GM12878 (cell line): ENCODE measurements at regions of chr1 and their contacts with region 1.

Region 1: DNA sequence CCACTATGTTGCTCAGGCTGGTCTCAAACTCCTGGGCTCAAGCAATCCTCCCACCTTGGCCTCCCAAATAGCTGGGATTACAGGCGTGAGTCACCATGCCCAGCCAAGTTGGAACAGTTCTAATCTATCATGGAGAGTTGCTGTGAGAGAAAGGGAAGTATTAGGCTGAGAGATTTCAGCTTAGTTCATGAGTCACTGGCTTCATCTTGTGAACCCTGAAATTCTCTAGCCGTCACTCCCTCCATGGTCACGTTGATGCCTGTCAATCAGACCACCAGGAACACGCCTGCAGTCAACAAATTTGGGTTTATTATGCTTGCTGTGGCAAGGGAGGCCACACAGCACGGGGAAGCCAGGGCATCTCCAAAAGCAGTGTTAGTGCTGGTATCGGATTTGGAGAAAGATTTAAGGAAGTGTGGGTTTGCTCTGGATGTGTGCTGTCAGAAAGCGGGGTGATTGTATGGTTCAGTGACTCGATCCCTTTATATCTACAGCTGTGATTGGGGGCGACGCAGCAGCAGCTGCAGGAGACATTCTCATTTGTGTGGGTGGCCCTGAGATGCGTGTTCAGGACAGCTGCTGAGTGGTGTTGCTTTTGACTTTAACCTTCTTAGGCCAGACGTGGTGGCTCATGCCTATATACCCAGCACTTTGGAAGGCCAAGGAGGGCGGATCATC is 18.7 kb downstream of the UQCRHL start:
- DNase-seq: no peak
- ATAC-seq: peak; percentile 34; the same call in 2 of the 3 replicates
- H3K4me3 ChIP-seq: no peak overlapping the region
- H3K27ac ChIP-seq: no peak overlapping the region
- H3K4me1 ChIP-seq: peaks cover 5% of the 10 kb centered on the region
- H3K27me3 ChIP-seq: no peaks in the 10 kb centered on the region; a peak in 1 of 4 replicates
- CTCF ChIP-seq: no peak
- EP300 ChIP-seq: no peak
- POLR2A ChIP-seq: no peak
- RAD21 ChIP-seq: no peak

Region 2: GRCh38 chr1:15538770-15539169 is 250.0 kb before region 1 on chr1:
- CTCF ChIA-PET with region 1: no interaction called
- POLR2A ChIA-PET with region 1: no interaction called
- RAD21 ChIA-PET with region 1: no interaction called
- SMC1A ChIA-PET with region 1: no interaction called
- in situ Hi-C with region 1: no loop called
- intact Hi-C with region 1: no loop called
- DNase-seq: no peak
- ATAC-seq: no peak
- H3K4me3 ChIP-seq: no peak overlapping the region
- H3K27ac ChIP-seq: no peak overlapping the region
- H3K4me1 ChIP-seq: no peaks in the 10 kb centered on the region
- H3K27me3 ChIP-seq: no peaks in the 10 kb centered on the region
- CTCF ChIP-seq: no peak
- EP300 ChIP-seq: no peak
- POLR2A ChIP-seq: no peak
- RAD21 ChIP-seq: no peak

Region 3: DNA sequence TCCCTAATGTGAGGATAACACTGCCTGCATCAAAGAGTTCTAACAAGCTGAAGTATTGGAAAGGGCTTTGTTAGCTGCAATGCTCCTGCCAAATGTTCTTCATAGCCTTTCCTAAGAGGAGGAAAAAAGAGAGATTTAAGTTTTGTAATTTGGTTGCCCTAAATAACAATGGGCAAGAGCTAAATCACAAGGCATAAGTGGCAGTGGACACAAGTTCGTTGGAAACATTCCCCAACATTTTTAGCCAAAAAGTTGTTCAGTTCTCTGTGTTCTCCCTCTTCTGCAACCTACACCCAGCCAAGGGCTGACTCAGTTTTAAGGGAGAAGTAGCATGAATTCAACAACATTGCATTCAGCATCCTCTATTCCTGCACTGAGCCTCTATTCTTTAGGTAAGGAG is 21.3 kb after region 1 on chr1:
- CTCF ChIA-PET with region 1: interaction called, 31 read pairs
- POLR2A ChIA-PET with region 1: no interaction called
- RAD21 ChIA-PET with region 1: interaction called, 11 read pairs
- SMC1A ChIA-PET with region 1: interaction called, 9 read pairs
- in situ Hi-C with region 1: no loop called
- intact Hi-C with region 1: no loop called
- DNase-seq: no peak
- ATAC-seq: no peak
- H3K4me3 ChIP-seq: no peak overlapping the region
- H3K27ac ChIP-seq: no peak overlapping the region
- H3K4me1 ChIP-seq: no peaks in the 10 kb centered on the region
- H3K27me3 ChIP-seq: no peaks in the 10 kb centered on the region
- CTCF ChIP-seq: no peak
- EP300 ChIP-seq: no peak
- POLR2A ChIP-seq: no peak
- RAD21 ChIP-seq: no peak

Region 4: GRCh38 chr1:15994590-15995351 is 206.0 kb after region 1 on chr1:
- CTCF ChIA-PET with region 1: interaction called, 14 read pairs
- POLR2A ChIA-PET with region 1: no interaction called
- RAD21 ChIA-PET with region 1: interaction called, 5 read pairs
- SMC1A ChIA-PET with region 1: interaction called, 8 read pairs
- in situ Hi-C with region 1: no loop called
- intact Hi-C with region 1: loop called (anchors 5 kb)
- DNase-seq: no peak
- ATAC-seq: peak; percentile 97
- H3K4me3 ChIP-seq: no peak overlapping the region
- H3K27ac ChIP-seq: no peak overlapping the region
- H3K4me1 ChIP-seq: no peaks in the 10 kb centered on the region
- H3K27me3 ChIP-seq: no peaks in the 10 kb centered on the region
- CTCF ChIP-seq: peak; percentile 72 to 83 (median 78)
- EP300 ChIP-seq: no peak
- POLR2A ChIP-seq: no peak
- RAD21 ChIP-seq: peak; percentile 85

Region 5: GRCh38 chr1:16055613-16056520 is 267.1 kb after region 1 on chr1:
- CTCF ChIA-PET with region 1: interaction called, 5 read pairs
- POLR2A ChIA-PET with region 1: no interaction called
- RAD21 ChIA-PET with region 1: interaction called, 9 read pairs
- SMC1A ChIA-PET with region 1: no interaction called
- in situ Hi-C with region 1: no loop called
- intact Hi-C with region 1: loop called (anchors 1 kb)
- DNase-seq: peak; percentile 33
- ATAC-seq: peak; percentile 97
- H3K4me3 ChIP-seq: no peak overlapping the region
- H3K27ac ChIP-seq: no peak overlapping the region
- H3K4me1 ChIP-seq: no peaks in the 10 kb centered on the region
- H3K27me3 ChIP-seq: no peaks in the 10 kb centered on the region
- CTCF ChIP-seq: peak; percentile 97 to 100 (median 98)
- EP300 ChIP-seq: no peak
- POLR2A ChIP-seq: no peak
- RAD21 ChIP-seq: peak; percentile 96

Region 6: DNA sequence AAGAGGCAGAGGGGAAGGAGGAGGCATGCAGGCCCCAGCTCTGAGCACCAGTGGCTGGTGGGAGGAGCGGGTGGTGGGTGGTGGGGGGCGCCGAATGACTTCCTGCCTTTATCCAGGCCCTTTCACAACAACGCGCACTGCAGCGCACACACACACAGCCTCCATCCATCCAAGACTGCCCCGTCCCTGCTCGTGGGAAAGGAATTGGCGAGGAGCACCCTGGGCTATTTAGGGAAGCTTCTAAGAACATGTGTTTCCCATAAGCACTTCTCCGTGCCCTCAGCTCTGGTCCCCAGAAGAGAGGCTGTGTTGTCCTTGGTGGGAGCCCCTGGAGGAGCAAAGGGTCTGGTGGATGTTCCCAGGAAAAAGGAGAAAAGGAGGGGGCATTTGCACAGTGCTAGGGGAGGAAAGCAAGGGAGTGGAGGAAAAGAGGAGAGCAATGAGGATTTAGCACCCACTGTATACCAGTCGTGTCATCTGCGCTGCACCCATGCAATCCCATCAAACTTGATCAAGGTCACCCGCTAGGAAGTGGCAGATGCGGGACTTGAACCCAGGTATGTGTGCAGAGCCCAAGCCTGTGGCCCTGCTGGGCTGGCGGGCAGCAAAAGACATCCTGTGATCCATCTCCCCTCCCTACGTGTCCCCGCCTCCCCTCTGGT is 339.0 kb after region 1 on chr1:
- CTCF ChIA-PET with region 1: no interaction called
- POLR2A ChIA-PET with region 1: no interaction called
- RAD21 ChIA-PET with region 1: no interaction called
- SMC1A ChIA-PET with region 1: no interaction called
- in situ Hi-C with region 1: no loop called
- intact Hi-C with region 1: no loop called
- DNase-seq: no peak
- ATAC-seq: no peak
- H3K4me3 ChIP-seq: no peak overlapping the region
- H3K27ac ChIP-seq: no peak overlapping the region
- H3K4me1 ChIP-seq: no peaks in the 10 kb centered on the region; the same call in 1 of the 2 replicates
- H3K27me3 ChIP-seq: no peaks in the 10 kb centered on the region; a peak in 1 of 4 replicates
- CTCF ChIP-seq: no peak
- EP300 ChIP-seq: no peak
- POLR2A ChIP-seq: no peak
- RAD21 ChIP-seq: no peak